ENCODE measurements at regions of chr10 and their contacts with region 1.

Region 1: GRCh38 chr10:73131301-73131700 is 21.0 kb downstream of the NUDT13 start:
- DNase-seq: peak; percentile 100
- ATAC-seq: peak; percentile 96
- H3K4me3 ChIP-seq: peak overlapping the region; percentile 1; the same call in 1 of the 2 replicates
- H3K27ac ChIP-seq: peak overlapping the region; percentile 72
- H3K4me1 ChIP-seq: peaks cover 29% of the 10 kb centered on the region
- H3K27me3 ChIP-seq: no peaks in the 10 kb centered on the region
- CTCF ChIP-seq: no peak

Region 2: DNA sequence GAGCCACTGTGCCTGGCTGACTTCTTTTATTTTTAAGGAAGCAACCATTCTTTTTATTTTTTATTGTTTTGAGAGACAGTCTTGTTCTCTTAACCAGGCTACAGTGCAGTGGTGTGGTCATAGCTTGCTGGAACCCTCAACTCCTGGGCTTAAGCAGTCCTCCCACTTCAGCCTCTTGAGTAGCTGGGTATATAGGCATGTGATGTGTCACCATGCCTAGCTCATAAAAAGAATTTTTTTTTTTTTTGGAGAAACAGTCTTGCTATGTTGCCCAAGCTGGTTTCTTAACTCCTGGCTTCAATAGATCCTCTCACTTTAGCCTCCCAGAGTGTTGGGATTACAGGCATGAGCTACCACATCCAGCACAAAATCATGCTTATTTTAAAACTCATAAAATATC is 433.6 kb before region 1 on chr10:
- CTCF ChIA-PET with region 1: no interaction called
- POLR2A ChIA-PET with region 1: no interaction called
- intact Hi-C with region 1: no loop called
- DNase-seq: no peak
- ATAC-seq: no peak
- H3K4me3 ChIP-seq: no peak overlapping the region
- H3K27ac ChIP-seq: no peak overlapping the region
- H3K4me1 ChIP-seq: peaks cover 18% of the 10 kb centered on the region
- H3K27me3 ChIP-seq: no peaks in the 10 kb centered on the region
- CTCF ChIP-seq: no peak

Region 3: GRCh38 chr10:73110345-73110849 is 20.9 kb before region 1 on chr10 and contains the start of gene NUDT13:
- CTCF ChIA-PET with region 1: interaction called, 3 read pairs
- POLR2A ChIA-PET with region 1: interaction called, 10 read pairs
- intact Hi-C with region 1: loop called (anchors 1 kb)
- DNase-seq: peak; percentile 72
- ATAC-seq: peak; percentile 63
- H3K4me3 ChIP-seq: peak within 1 kb of the TSS; percentile 54
- H3K27ac ChIP-seq: peak within 1 kb of the TSS; percentile 68
- H3K4me1 ChIP-seq: peaks cover 30% of the 10 kb centered on the region
- H3K27me3 ChIP-seq: no peaks in the 10 kb centered on the region
- CTCF ChIP-seq: no peak
- total RNA-seq, gene NUDT13: 1.1 and 1.8 TPM in 2 replicates

Region 4: GRCh38 chr10:73117976-73118743 is 13.1 kb before region 1 on chr10:
- CTCF ChIA-PET with region 1: interaction called, 3 read pairs
- POLR2A ChIA-PET with region 1: no interaction called
- intact Hi-C with region 1: loop called (anchors 1 kb)
- DNase-seq: peak; percentile 99
- ATAC-seq: peak; percentile 87
- H3K4me3 ChIP-seq: peak overlapping the region; percentile 45
- H3K27ac ChIP-seq: peak overlapping the region; percentile 81
- H3K4me1 ChIP-seq: peaks cover 59% of the 10 kb centered on the region
- H3K27me3 ChIP-seq: no peaks in the 10 kb centered on the region
- CTCF ChIP-seq: no peak